ENCODE measurements at regions of chr6 and their contacts with region 1.

Region 1: GRCh38 chr6:157813757-157814455 is 9.1 kb upstream of the SNX9 start:
- DNase-seq: no peak
- ATAC-seq: no peak
- H3K4me3 ChIP-seq: no peak overlapping the region
- H3K4me3 Mint-ChIP-seq: peak overlapping the region in 1 of 3 donors; percentile 69
- H3K27ac ChIP-seq: no peak overlapping the region
- H3K27ac Mint-ChIP-seq: peak overlapping the region; percentile 5 to 78
- H3K4me1 ChIP-seq: peaks cover 14 to 19% of the 10 kb centered on the region in 2 experiments
- H3K4me1 Mint-ChIP-seq: peaks cover 44 to 52% (median 48%) of the 10 kb centered on the region in 3 donors
- H3K27me3 ChIP-seq: no peaks in the 10 kb centered on the region
- H3K27me3 Mint-ChIP-seq: no peaks in the 10 kb centered on the region

Region 2: DNA sequence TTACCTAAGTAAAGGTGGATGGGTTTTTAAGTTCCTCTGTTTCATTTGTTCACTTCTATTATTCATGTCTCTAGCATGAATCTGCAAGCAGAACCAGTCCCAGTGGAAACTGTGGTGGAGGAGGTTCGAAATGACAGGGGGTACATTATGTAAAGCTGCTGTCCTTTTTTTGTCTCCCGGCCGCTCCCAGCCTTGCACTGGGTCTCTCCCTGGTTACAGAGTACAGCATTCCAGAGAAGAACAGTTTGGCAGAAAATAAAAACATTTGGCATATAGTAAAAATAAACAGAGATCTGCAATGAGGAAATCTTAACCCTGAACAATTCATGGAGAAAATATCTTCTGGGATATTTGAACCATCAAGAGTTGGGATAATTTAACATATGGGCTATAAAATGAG is 1265.5 kb after region 1 on chr6:
- CTCF ChIA-PET with region 1: no interaction called
- POLR2A ChIA-PET with region 1: interaction called in 1 of 2 experiments, 16 read pairs
- DNase-seq: no peak
- ATAC-seq: no peak
- H3K4me3 ChIP-seq: no peak overlapping the region
- H3K4me3 Mint-ChIP-seq: no peak overlapping the region
- H3K27ac ChIP-seq: no peak overlapping the region
- H3K27ac Mint-ChIP-seq: no peak overlapping the region
- H3K4me1 ChIP-seq: peaks cover 5 to 34% of the 10 kb centered on the region in 2 experiments
- H3K4me1 Mint-ChIP-seq: peaks cover 45 to 54% (median 51%) of the 10 kb centered on the region in 3 donors
- H3K27me3 ChIP-seq: peaks cover 0 to 3% of the 10 kb centered on the region in 2 experiments
- H3K27me3 Mint-ChIP-seq: no peaks in the 10 kb centered on the region